Activated T-helper 1 cell treated with anti-CD3 and anti-CD28 coated beads, Interleukin-12 subunit alpha, Interleukin-12 subunit beta, Interleukin-2, Interleukin-4 antibody, amounts not matched to agents 30 ng/mL and 10 ng/mL and 1 ng/mL, durations not matched to agents 14 hours and 24 hours and 36 hours (primary cell): ENCODE measurements at regions of chr1 and their contacts with region 1.

Region 1: GRCh38 chr1:186482661-186483255 is 21.8 kb upstream of the PDC start:
- DNase-seq: peak; percentile 11
- H3K4me3 Mint-ChIP-seq: no peak overlapping the region
- H3K27ac Mint-ChIP-seq: no peak overlapping the region
- H3K4me1 Mint-ChIP-seq: no peaks in the 10 kb centered on the region
- H3K27me3 Mint-ChIP-seq: peaks cover 4% of the 10 kb centered on the region

Region 2: DNA sequence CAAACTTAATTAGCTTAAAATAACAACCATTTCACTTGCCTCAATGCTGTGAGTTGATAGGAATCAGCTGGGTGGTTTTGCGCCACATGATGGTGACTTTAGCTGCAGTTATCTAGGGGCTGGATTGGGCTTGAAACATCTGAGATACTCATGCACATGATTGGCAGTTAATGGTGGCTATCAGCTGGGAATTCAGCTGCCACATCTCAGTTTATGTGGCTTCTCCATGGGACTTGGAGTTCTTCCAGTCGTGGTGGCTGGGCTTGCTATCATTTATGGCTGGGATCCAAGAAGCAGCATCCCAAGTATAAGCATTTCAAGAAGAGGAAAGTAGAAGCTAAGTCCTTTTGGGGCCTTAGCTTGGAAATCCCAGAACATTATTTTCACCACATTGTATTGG is 58.2 kb before region 1 on chr1:
- intact Hi-C with region 1: no loop called
- DNase-seq: no peak
- H3K4me3 Mint-ChIP-seq: no peak overlapping the region
- H3K27ac Mint-ChIP-seq: no peak overlapping the region
- H3K4me1 Mint-ChIP-seq: peaks cover 32% of the 10 kb centered on the region
- H3K27me3 Mint-ChIP-seq: no peaks in the 10 kb centered on the region

Region 3: GRCh38 chr1:186605762-186606350 is 123.1 kb after region 1 on chr1:
- intact Hi-C with region 1: loop called (anchors 5 kb)
- DNase-seq: peak; percentile 11
- H3K4me3 Mint-ChIP-seq: no peak overlapping the region
- H3K27ac Mint-ChIP-seq: no peak overlapping the region
- H3K4me1 Mint-ChIP-seq: no peaks in the 10 kb centered on the region
- H3K27me3 Mint-ChIP-seq: peaks cover 51% of the 10 kb centered on the region

Region 4: GRCh38 chr1:186680245-186681061 is 197.7 kb after region 1 on chr1 and contains the start of gene PTGS2:
- intact Hi-C with region 1: loop called (anchors 1 kb)
- DNase-seq: peak; percentile 21
- H3K4me3 Mint-ChIP-seq: peak within 1 kb of the TSS; percentile 72
- H3K27ac Mint-ChIP-seq: no peak within 1 kb of the TSS
- H3K4me1 Mint-ChIP-seq: peaks cover 13% of the 10 kb centered on the region
- H3K27me3 Mint-ChIP-seq: peaks cover 56% of the 10 kb centered on the region
- total RNA-seq, gene PTGS2: 0.67 and 0.71 TPM in 2 replicates

Region 5: DNA sequence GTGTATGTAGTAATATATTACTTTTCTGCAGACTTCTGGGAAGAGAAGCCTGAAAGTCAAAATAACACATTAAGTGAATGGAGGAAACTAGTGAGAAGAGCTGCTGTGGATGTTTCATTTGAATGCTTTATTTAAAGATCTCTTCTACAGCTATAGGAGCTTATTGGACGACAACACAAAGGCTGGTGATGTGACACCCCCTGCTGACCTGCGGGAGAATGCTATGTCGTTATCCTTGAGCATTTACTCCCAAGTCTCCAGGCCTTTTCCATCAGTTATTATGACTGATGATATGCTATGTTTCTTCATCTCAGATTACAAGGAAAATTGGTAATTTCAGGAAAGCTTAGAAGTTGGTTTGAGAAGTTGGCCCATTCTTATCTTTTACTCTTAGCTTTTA is 323.7 kb after region 1 on chr1:
- intact Hi-C with region 1: loop called (anchors 1 kb)
- DNase-seq: no peak
- H3K4me3 Mint-ChIP-seq: no peak overlapping the region
- H3K27ac Mint-ChIP-seq: no peak overlapping the region
- H3K4me1 Mint-ChIP-seq: no peaks in the 10 kb centered on the region
- H3K27me3 Mint-ChIP-seq: no peaks in the 10 kb centered on the region

Region 6: GRCh38 chr1:186985889-186986491 is 503.2 kb after region 1 on chr1:
- intact Hi-C with region 1: loop called (anchors 1 kb)
- DNase-seq: peak; percentile 3
- H3K4me3 Mint-ChIP-seq: no peak overlapping the region
- H3K27ac Mint-ChIP-seq: no peak overlapping the region
- H3K4me1 Mint-ChIP-seq: no peaks in the 10 kb centered on the region
- H3K27me3 Mint-ChIP-seq: peaks cover 7% of the 10 kb centered on the region